Activated CD4-positive, alpha-beta T cell treated with anti-CD3 and anti-CD28 coated beads for 36 hours (primary cell): ENCODE measurements at regions of chr14 and their contacts with region 1.

Region 1: DNA sequence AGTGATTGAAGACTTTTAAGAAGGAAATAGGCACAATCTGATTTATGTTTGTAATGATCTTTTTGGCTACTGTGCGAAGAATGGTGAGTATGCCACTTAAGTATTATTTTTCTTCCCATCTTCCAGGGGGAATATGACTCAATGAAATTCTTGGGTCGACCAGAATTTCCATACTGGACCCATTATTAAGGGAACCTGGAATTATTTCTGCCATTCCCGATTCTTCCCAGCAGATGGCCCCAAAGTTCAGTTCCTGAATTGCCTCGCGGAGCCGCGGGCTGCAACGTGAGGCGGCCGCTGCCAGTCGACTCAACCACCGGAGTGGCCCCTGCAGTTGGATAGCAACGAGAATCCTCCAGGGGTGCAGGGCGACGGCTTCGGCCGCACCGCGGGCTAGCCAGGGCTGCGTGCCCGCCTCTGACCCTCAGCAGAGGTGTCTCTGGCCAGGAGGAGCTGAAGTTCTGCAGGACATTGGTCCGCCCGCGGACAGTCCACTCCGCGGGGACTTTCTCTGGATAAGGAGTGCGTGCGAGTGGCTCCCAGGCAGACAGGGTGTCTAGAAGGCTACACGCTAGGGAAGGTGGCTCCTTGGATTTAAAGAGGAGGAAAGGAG is 628 bp upstream of the TSHR start:
- DNase-seq: peak; percentile 82
- ATAC-seq: peak; percentile 67
- H3K4me3 Mint-ChIP-seq: peak overlapping the region; percentile 75
- H3K27ac Mint-ChIP-seq: peak overlapping the region; percentile 72
- H3K4me1 Mint-ChIP-seq: peaks cover 41% of the 10 kb centered on the region
- H3K27me3 Mint-ChIP-seq: peaks cover 13% of the 10 kb centered on the region

Region 2: GRCh38 chr14:80930836-80931389 is 23.9 kb before region 1 on chr14:
- CTCF ChIA-PET with region 1: interaction called, 5 read pairs
- POLR2A ChIA-PET with region 1: no interaction called
- intact Hi-C with region 1: loop called in 1 of 2 experiments (anchors 1 kb)
- DNase-seq: peak; percentile 73
- ATAC-seq: peak; percentile 99
- H3K4me3 Mint-ChIP-seq: peak overlapping the region; percentile 50
- H3K27ac Mint-ChIP-seq: peak overlapping the region; percentile 85
- H3K4me1 Mint-ChIP-seq: peaks cover 33% of the 10 kb centered on the region
- H3K27me3 Mint-ChIP-seq: no peaks in the 10 kb centered on the region

Region 3: DNA sequence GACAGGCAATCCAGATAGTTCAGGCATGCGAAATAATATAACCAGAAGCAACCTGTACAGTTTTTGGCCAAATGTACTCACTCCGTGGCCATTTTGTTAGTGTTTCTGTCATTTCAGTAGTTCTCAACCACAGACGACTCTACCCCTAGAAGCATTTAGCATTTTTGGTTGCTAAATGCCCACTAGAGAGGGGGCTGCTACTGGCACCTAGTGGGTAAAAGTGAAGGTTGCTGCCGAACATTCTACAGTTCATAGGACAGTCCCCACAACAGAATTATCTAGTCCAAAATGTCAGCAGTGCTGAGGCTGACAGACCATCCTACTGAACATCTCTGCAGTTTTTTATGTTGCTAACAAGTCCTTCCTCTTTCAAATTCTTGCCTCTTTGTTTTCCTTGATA is 108.0 kb after region 1 on chr14:
- CTCF ChIA-PET with region 1: no interaction called
- POLR2A ChIA-PET with region 1: no interaction called
- intact Hi-C with region 1: loop called (anchors 1 to 2 kb)
- DNase-seq: peak; percentile 41
- ATAC-seq: peak; percentile 84
- H3K4me3 Mint-ChIP-seq: no peak overlapping the region
- H3K27ac Mint-ChIP-seq: no peak overlapping the region
- H3K4me1 Mint-ChIP-seq: no peaks in the 10 kb centered on the region
- H3K27me3 Mint-ChIP-seq: peaks cover 6% of the 10 kb centered on the region

Region 4: DNA sequence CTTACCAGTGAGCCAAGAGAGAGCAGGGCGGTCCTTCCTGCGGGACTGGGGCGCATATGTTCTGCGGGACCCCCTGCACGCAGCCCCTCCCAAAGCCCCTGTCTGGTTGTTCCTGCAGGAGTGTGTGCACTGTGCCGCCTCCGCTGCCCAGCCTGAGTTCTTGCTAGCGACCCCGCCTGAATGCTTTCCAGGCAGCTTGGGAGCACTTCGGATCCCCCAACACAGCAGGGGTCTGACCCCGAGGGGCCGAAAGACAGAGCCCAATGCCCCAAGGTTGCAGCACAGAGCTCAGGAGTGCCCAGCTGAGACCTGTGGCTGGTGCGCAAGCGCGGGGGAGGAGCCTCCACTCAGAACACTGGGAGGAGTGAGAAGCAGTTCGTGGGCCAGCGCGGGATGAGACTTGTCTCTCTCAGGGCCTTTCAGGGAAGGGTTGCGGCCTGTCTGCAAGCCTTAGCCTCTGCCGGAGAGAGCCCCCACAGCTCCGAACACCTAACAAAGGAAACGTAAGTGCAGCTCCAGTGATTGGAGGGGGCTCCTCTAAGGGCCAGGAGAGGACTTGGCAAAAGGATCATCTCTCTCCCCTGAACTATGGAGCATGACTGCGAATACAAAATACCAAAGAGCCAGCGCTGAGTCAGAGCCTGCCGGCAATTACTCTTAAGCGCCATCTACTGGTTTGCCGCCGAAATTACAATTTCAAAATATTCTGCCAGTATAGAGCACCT is 215.5 kb after region 1 on chr14:
- CTCF ChIA-PET with region 1: interaction called, 15 read pairs
- POLR2A ChIA-PET with region 1: no interaction called
- intact Hi-C with region 1: loop called (anchors 1 kb)
- DNase-seq: peak; percentile 94
- ATAC-seq: peak; percentile 98
- H3K4me3 Mint-ChIP-seq: peak overlapping the region; percentile 83
- H3K27ac Mint-ChIP-seq: peak overlapping the region; percentile 92
- H3K4me1 Mint-ChIP-seq: peaks cover 20% of the 10 kb centered on the region
- H3K27me3 Mint-ChIP-seq: no peaks in the 10 kb centered on the region

Region 5: GRCh38 chr14:81211844-81212243 is 257.1 kb after region 1 on chr14:
- CTCF ChIA-PET with region 1: no interaction called
- POLR2A ChIA-PET with region 1: no interaction called
- intact Hi-C with region 1: loop called (anchors 5 kb)
- DNase-seq: peak; percentile 45
- ATAC-seq: peak; percentile 69
- H3K4me3 Mint-ChIP-seq: no peak overlapping the region
- H3K27ac Mint-ChIP-seq: no peak overlapping the region
- H3K4me1 Mint-ChIP-seq: peaks cover 42% of the 10 kb centered on the region
- H3K27me3 Mint-ChIP-seq: no peaks in the 10 kb centered on the region

Region 6: GRCh38 chr14:81464247-81465002 is 509.6 kb after region 1 on chr14:
- CTCF ChIA-PET with region 1: no interaction called
- POLR2A ChIA-PET with region 1: no interaction called
- intact Hi-C with region 1: loop called in 1 of 2 experiments (anchors 2 kb)
- DNase-seq: peak; percentile 69
- ATAC-seq: peak; percentile 66
- H3K4me3 Mint-ChIP-seq: peak overlapping the region; percentile 70
- H3K27ac Mint-ChIP-seq: peak overlapping the region; percentile 85
- H3K4me1 Mint-ChIP-seq: peaks cover 7% of the 10 kb centered on the region
- H3K27me3 Mint-ChIP-seq: no peaks in the 10 kb centered on the region